ENCODE measurements at regions of chr10 and their contacts with region 1.

Region 1: DNA sequence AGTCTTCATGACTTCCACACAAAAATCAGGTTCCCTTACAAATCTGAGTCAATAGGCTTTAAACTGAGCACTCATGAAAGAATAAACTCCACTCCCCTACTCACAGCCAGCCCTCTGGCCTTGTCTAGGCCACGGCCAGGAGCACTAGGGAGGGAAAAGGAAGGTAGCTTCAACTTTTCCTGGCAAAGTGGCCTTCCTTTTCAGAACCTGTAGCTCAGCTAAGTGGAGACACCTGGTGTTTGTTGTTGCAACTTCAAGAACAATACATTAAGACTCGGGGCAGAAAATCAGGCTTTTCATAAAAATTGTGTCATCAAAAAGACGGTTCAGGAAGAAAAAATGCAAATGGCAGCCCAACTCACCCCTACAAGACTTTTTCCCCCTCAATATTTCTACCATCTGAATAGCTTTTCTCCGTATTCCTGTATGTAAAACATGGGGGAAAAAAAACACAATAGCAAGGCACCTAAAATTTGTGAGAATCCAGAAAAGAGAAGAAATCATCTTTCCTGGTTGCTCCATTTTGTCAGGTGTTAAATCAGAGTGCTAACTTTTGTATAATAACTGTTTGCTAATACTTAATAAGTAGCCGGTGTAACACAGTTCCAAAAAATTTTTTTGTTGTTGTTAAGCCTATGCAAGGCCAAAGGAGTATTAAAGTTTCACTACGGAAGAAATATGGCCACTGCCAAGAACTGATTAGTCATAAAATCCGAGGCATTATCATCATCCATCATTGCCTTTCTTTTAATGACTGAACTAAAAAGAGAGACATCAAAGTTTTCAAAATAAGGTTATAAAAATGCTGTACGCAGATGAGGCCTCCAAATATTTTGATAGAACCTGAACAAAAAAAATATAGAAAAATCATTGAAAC is 66.2 kb upstream of the ARID5B start:
- DNase-seq: peak; percentile 56 to 89 (median 66)
- ATAC-seq: peak; percentile 82
- H3K4me3 ChIP-seq: no peak overlapping the region
- H3K27ac ChIP-seq: no peak overlapping the region; the same call in 2 of the 3 replicates
- H3K4me1 ChIP-seq: peaks cover 8 to 29% of the 10 kb centered on the region in 2 experiments; a peak in 4 of 5 replicates
- H3K27me3 ChIP-seq: no peaks in the 10 kb centered on the region
- CTCF ChIP-seq: peak; percentile 75 to 86 (median 76)
- EP300 ChIP-seq: no peak
- POLR2A ChIP-seq: no peak
- RAD21 ChIP-seq: peak; percentile 95 to 99

Region 2: DNA sequence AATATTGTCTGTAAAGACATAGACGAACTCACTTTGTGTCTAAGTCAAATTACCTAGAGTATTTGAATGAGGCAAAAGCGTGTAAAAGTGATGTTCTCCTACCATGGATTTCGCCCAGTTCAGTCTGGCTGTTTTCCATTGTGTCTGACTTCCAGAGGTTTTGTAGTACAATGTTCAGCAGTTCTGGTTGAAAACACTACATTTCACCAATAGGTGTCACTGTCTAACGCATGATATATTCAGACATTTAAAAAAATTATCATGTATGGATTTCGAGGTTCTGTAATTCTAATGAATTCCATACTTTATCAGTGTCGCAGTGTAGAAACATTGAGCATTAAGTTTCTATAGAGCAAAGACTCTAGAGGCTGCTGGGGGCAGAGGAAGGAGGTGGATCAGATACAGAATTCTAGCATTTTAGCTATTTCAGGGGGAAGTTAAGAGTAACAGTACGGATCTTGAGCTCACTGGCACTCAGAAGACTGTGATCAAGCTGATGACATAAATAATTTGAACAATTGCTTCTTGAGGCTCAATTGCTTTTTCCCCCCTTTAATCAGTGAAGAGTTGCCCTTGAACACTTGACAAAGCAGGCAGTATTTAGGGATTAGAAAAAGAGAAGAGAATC is 694.4 kb before region 1 on chr10:
- CTCF ChIA-PET with region 1: no interaction called
- POLR2A ChIA-PET with region 1: no interaction called
- in situ Hi-C with region 1: no loop called
- intact Hi-C with region 1: loop called (anchors 10 kb)
- DNase-seq: peak; percentile 27 to 62 (median 38)
- ATAC-seq: peak; percentile 83
- H3K4me3 ChIP-seq: no peak overlapping the region
- H3K27ac ChIP-seq: no peak overlapping the region
- H3K4me1 ChIP-seq: no peaks in the 10 kb centered on the region
- H3K27me3 ChIP-seq: no peaks in the 10 kb centered on the region
- CTCF ChIP-seq: peak; percentile 52 to 79 (median 67); a peak in 5 of 6 replicates
- EP300 ChIP-seq: no peak
- POLR2A ChIP-seq: no peak
- RAD21 ChIP-seq: peak; percentile 70 to 79

Region 3: GRCh38 chr10:61592581-61592980 is 242.7 kb before region 1 on chr10:
- CTCF ChIA-PET with region 1: no interaction called
- POLR2A ChIA-PET with region 1: no interaction called
- in situ Hi-C with region 1: no loop called
- intact Hi-C with region 1: loop called (anchors 5 kb)
- DNase-seq: peak; percentile 21 to 73 (median 45)
- ATAC-seq: peak; percentile 94
- H3K4me3 ChIP-seq: no peak overlapping the region
- H3K27ac ChIP-seq: no peak overlapping the region
- H3K4me1 ChIP-seq: peaks cover 0 to 12% of the 10 kb centered on the region in 2 experiments; a peak in 3 of 5 replicates
- H3K27me3 ChIP-seq: no peaks in the 10 kb centered on the region
- CTCF ChIP-seq: peak; percentile 74 to 77 (median 75)
- EP300 ChIP-seq: no peak
- POLR2A ChIP-seq: no peak
- RAD21 ChIP-seq: peak; percentile 77 to 92

Region 4: DNA sequence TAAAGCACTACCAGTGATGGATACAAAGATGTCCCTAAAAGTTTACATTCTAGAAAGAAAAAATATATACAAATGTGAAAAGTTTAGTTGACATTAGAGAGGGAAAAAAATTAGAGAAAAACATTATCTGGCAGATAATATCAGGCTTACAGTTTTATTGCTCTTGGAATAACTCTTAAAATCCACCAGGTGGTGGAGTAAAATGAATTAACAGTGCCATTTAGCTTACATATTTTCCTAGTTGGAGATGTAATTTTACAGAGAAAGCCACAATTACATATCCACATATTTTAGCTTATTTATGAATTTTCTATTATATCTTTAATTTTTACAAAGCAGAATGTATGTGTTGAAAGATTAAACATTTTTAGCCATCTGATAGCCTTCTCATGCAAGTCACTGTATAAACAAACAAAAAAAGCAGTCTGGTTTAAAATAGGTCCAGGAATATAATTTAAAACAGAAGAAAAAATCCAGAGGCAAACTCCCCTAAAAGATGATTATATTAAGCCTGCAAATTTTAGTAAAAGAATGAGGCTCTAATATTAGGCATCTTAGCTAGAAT is 166.1 kb before region 1 on chr10:
- CTCF ChIA-PET with region 1: no interaction called
- POLR2A ChIA-PET with region 1: no interaction called
- in situ Hi-C with region 1: no loop called
- intact Hi-C with region 1: loop called (anchors 5 kb)
- DNase-seq: no peak
- ATAC-seq: no peak
- H3K4me3 ChIP-seq: no peak overlapping the region
- H3K27ac ChIP-seq: no peak overlapping the region
- H3K4me1 ChIP-seq: peaks cover 0 to 5% of the 10 kb centered on the region in 2 experiments; a peak in 1 of 5 replicates
- H3K27me3 ChIP-seq: no peaks in the 10 kb centered on the region
- CTCF ChIP-seq: no peak
- EP300 ChIP-seq: no peak
- POLR2A ChIP-seq: no peak
- RAD21 ChIP-seq: no peak

Region 5: GRCh38 chr10:61750929-61751471 is 84.3 kb before region 1 on chr10:
- CTCF ChIA-PET with region 1: interaction called, 23 read pairs
- POLR2A ChIA-PET with region 1: interaction called, 4 read pairs
- in situ Hi-C with region 1: loop called (anchors 5 kb)
- intact Hi-C with region 1: loop called (anchors 1 kb)
- DNase-seq: peak; percentile 80 to 93 (median 86)
- ATAC-seq: peak; percentile 97
- H3K4me3 ChIP-seq: no peak overlapping the region
- H3K27ac ChIP-seq: peak overlapping the region; percentile 66; the same call in 2 of the 3 replicates
- H3K4me1 ChIP-seq: peaks cover 4 to 36% of the 10 kb centered on the region in 2 experiments; a peak in 3 of 5 replicates
- H3K27me3 ChIP-seq: no peaks in the 10 kb centered on the region
- CTCF ChIP-seq: peak; percentile 92 to 97 (median 94)
- EP300 ChIP-seq: peak; percentile 34; the same call in 1 of the 2 replicates
- POLR2A ChIP-seq: no peak
- RAD21 ChIP-seq: peak; percentile 79 to 92

Region 6: GRCh38 chr10:61779950-61780659 is 55.2 kb before region 1 on chr10:
- CTCF ChIA-PET with region 1: no interaction called
- POLR2A ChIA-PET with region 1: no interaction called
- in situ Hi-C with region 1: no loop called
- intact Hi-C with region 1: loop called (anchors 5 kb)
- DNase-seq: peak; percentile 79 to 93 (median 80)
- ATAC-seq: peak; percentile 73
- H3K4me3 ChIP-seq: no peak overlapping the region
- H3K27ac ChIP-seq: peak overlapping the region; percentile 74
- H3K4me1 ChIP-seq: peaks cover 5 to 72% of the 10 kb centered on the region in 2 experiments
- H3K27me3 ChIP-seq: no peaks in the 10 kb centered on the region
- CTCF ChIP-seq: no peak
- EP300 ChIP-seq: peak; percentile 93
- POLR2A ChIP-seq: no peak; the same call in 1 of the 2 replicates
- RAD21 ChIP-seq: no peak